OCI-LY7 (cell line): ENCODE measurements at regions of chr20 and their contacts with region 1.

Region 1: DNA sequence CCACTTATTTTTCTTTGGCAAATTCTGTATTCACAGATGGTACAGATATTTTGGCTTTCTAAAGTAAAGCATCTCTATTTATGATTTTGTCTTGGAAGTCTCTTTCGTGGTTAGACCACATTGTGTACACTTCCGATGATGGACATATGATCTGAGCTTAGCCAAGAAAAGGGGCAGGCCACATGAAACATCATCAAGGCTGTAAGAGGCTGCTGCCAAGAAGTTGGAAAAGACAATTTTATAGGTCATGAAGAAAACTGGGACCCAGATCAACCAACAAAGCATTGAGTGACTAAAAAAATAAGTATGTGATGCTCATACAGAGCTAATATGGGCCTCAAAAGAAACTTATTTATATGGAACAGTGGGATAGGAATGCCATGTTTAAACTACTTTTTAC is 266.4 kb downstream of the HAO1 start:
- DNase-seq: no peak
- H3K4me3 ChIP-seq: no peak overlapping the region
- H3K27ac ChIP-seq: no peak overlapping the region
- H3K4me1 ChIP-seq: peaks cover 15% of the 10 kb centered on the region
- CTCF ChIP-seq: no peak

Region 2: DNA sequence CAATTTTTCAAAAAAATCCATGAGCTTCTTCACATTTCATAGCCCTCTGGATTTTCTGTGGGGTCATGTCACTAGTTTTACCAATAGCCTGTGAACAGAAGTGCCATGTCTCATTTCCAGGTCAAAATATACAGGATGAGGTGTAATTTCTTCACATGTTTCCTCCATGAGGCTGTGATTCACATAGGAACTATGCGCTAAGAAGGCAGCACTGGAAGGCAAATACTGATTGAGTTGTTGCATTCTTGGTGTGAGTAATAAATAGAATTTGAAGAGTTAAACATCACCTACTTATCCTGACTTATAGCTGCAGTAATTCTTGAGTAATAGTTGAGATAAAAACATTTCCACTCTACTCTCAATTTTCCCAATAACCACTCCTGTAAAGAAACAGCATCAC is 175.9 kb before region 1 on chr20:
- CTCF ChIA-PET with region 1: no interaction called
- POLR2A ChIA-PET with region 1: no interaction called
- intact Hi-C with region 1: loop called (anchors 10 kb)
- DNase-seq: no peak
- H3K4me3 ChIP-seq: no peak overlapping the region
- H3K27ac ChIP-seq: no peak overlapping the region
- H3K4me1 ChIP-seq: peaks cover 6% of the 10 kb centered on the region
- CTCF ChIP-seq: no peak

Region 3: GRCh38 chr20:7723284-7723683 is 49.4 kb after region 1 on chr20:
- CTCF ChIA-PET with region 1: no interaction called
- POLR2A ChIA-PET with region 1: no interaction called
- intact Hi-C with region 1: no loop called
- DNase-seq: no peak
- H3K4me3 ChIP-seq: no peak overlapping the region
- H3K27ac ChIP-seq: no peak overlapping the region
- H3K4me1 ChIP-seq: no peaks in the 10 kb centered on the region
- CTCF ChIP-seq: no peak

Region 4: GRCh38 chr20:7828437-7828836 is 154.6 kb after region 1 on chr20:
- CTCF ChIA-PET with region 1: no interaction called
- POLR2A ChIA-PET with region 1: no interaction called
- intact Hi-C with region 1: no loop called
- DNase-seq: no peak
- H3K4me3 ChIP-seq: no peak overlapping the region
- H3K27ac ChIP-seq: no peak overlapping the region
- H3K4me1 ChIP-seq: no peaks in the 10 kb centered on the region
- CTCF ChIP-seq: no peak